Naive thymus-derived CD4-positive, alpha-beta T cell (primary cell): ENCODE measurements at regions of chr5 and their contacts with region 1.

Region 1: DNA sequence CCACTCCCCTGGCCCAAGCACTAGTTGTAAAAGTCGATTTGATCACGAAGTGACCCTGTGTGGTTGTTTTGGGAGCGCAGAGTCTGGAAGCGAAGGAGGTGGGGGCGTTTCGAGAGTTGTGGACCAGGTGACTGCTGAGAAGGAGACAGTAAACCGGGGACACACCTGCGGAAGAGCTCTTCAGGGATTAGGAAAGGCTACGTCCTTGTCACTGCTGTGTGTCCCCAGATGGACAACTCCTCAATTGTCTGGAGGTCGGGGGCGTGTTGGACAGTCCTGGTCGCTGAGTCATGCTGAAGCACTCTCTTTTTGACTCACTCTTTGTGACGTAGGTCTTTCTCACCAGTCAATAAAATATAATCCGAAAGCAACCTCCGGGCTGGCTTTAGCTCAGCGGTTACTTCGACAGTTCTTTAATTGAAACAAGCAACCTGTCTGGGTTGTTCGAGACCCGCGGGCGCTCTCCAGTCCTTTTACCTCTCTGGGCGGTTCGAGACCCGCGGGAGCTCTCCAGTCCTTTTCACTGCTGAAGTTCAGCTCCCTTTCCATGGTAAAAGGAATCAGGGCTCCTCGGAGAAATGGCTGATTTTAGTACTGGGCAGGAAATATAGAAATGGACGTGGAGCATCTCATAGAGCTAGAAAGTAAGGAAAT is 10.8 kb downstream of the ZMAT2 start:
- DNase-seq: peak; percentile 57 to 94 (median 87)
- ATAC-seq: peak; percentile 89
- H3K4me3 ChIP-seq: peak overlapping the region; percentile 96
- H3K4me3 Mint-ChIP-seq: peak overlapping the region; percentile 95 to 100 (median 99)
- H3K27ac ChIP-seq: peak overlapping the region; percentile 72
- H3K27ac Mint-ChIP-seq: peak overlapping the region; percentile 98 to 100 (median 99)
- H3K4me1 ChIP-seq: peaks cover 0 to 5% of the 10 kb centered on the region in 2 donors
- H3K4me1 Mint-ChIP-seq: peaks cover 6 to 35% (median 25%) of the 10 kb centered on the region in 7 donors
- H3K27me3 ChIP-seq: no peaks in the 10 kb centered on the region
- H3K27me3 Mint-ChIP-seq: peaks cover 0 to 11% (median 0%) of the 10 kb centered on the region in 5 donors

Region 2: GRCh38 chr5:138953387-138954256 is 1757.4 kb before region 1 on chr5:
- CTCF ChIA-PET with region 1: no interaction called
- POLR2A ChIA-PET with region 1: no interaction called
- intact Hi-C with region 1: no loop called
- DNase-seq: peak in 6 of 9 donors; percentile 4 to 29 (median 16)
- ATAC-seq: peak; percentile 78
- H3K4me3 ChIP-seq: no peak overlapping the region
- H3K4me3 Mint-ChIP-seq: peak overlapping the region; percentile 14 to 70 (median 58)
- H3K27ac ChIP-seq: no peak overlapping the region
- H3K27ac Mint-ChIP-seq: peak overlapping the region in 5 of 9 donors; percentile 29 to 61 (median 56)
- H3K4me1 ChIP-seq: peaks cover 7 to 14% of the 10 kb centered on the region in 2 donors
- H3K4me1 Mint-ChIP-seq: peaks cover 13 to 23% (median 14%) of the 10 kb centered on the region in 7 donors
- H3K27me3 ChIP-seq: no peaks in the 10 kb centered on the region
- H3K27me3 Mint-ChIP-seq: no peaks in the 10 kb centered on the region

Region 3: DNA sequence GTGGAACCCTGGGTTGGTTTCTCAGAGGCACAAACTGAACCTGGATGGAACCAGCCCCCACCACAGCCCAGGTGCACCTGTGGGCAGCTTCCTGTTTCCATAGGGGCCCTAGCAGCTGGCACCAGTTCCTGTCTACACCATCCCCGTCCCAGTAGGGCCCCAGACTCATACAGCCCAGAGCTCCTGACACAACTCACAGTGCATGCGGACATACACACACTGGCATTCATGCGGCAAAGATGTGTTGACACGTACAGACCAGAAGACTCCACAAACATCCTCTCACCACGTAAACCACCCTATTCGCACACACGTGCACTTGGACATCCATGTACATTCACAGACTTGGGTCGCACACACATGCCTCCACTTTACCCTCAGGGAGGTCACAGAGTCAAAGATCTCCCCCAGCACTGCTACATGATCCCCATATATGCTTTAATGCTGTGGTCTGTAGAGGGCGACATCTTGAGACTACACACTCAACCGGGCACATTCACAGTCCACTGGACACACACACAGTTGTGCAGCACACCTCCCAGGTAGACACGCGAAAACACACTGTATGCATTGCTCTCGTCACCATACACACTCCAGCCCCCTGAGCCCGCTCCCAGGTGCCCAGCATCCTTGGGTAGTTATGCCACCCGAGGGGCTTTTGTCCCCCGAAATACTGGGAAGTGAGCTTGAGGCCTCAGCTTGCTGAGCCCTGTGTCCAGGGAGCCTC is 1040.5 kb before region 1 on chr5:
- CTCF ChIA-PET with region 1: no interaction called
- POLR2A ChIA-PET with region 1: no interaction called
- intact Hi-C with region 1: no loop called
- DNase-seq: no peak
- ATAC-seq: peak; percentile 47
- H3K4me3 ChIP-seq: peak overlapping the region; percentile 46
- H3K4me3 Mint-ChIP-seq: peak overlapping the region; percentile 30 to 86 (median 76)
- H3K27ac ChIP-seq: no peak overlapping the region
- H3K27ac Mint-ChIP-seq: peak overlapping the region in 5 of 9 donors; percentile 5 to 82 (median 42)
- H3K4me1 ChIP-seq: peaks cover 36% of the 10 kb centered on the region in 2 donors
- H3K4me1 Mint-ChIP-seq: peaks cover 7 to 55% (median 30%) of the 10 kb centered on the region in 7 donors
- H3K27me3 ChIP-seq: peaks cover 0 to 3% of the 10 kb centered on the region in 2 donors
- H3K27me3 Mint-ChIP-seq: peaks cover 0 to 4% (median 3%) of the 10 kb centered on the region in 5 donors

Region 4: DNA sequence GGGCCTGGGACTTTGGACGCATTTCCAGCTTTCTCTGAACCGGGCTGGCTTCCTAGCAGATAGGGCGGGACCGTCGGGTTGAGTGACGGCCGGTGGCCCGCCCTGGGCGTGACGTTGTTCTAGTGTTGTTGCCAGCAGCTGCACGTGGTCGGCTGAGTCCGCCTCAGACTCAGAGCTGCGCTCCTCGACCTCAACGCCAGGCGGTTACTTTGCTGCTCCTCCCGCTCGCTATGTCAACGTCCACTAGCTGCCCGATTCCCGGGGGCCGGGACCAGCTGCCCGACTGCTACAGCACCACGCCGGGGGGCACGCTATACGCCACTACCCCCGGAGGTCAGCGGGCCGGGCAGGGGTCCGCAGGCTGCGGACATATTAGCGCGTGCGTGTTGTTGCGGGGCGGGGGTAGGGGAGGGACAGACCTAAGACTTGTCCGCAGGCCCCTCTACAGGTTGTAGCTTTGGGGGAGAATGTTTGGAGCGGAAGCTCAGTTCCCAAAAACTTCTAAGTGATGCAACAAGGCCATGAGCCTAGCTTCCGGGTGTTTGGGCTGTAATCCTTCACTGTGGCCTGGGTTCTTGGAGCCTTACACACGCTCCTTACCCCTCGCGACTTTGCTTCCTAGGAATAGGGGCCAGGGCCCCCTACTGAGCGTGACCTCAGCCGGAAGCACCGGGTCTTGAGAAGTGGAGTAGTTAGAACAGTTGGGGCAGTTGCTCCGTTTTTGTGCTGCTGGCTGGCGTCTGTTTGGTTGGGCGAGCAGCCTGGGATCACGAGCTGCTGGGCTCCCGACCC is 163.3 kb before region 1 on chr5 and contains the start of gene EIF4EBP3:
- CTCF ChIA-PET with region 1: no interaction called
- POLR2A ChIA-PET with region 1: interaction called, 20 read pairs
- intact Hi-C with region 1: loop called in 1 of 2 experiments (anchors 2 kb)
- DNase-seq: peak; percentile 76 to 90 (median 88)
- ATAC-seq: peak; percentile 98
- H3K4me3 ChIP-seq: peak within 1 kb of the TSS; percentile 83
- H3K4me3 Mint-ChIP-seq: peak within 1 kb of the TSS; percentile 85 to 99 (median 92)
- H3K27ac ChIP-seq: peak within 1 kb of the TSS; percentile 89
- H3K27ac Mint-ChIP-seq: peak within 1 kb of the TSS; percentile 93 to 99 (median 98)
- H3K4me1 ChIP-seq: peaks cover 12 to 20% of the 10 kb centered on the region in 2 donors
- H3K4me1 Mint-ChIP-seq: peaks cover 22 to 49% (median 37%) of the 10 kb centered on the region in 7 donors
- H3K27me3 ChIP-seq: no peaks in the 10 kb centered on the region
- H3K27me3 Mint-ChIP-seq: no peaks in the 10 kb centered on the region
- total RNA-seq, gene EIF4EBP3: 12.5 to 19.5 (median 16.2) TPM

Region 5: DNA sequence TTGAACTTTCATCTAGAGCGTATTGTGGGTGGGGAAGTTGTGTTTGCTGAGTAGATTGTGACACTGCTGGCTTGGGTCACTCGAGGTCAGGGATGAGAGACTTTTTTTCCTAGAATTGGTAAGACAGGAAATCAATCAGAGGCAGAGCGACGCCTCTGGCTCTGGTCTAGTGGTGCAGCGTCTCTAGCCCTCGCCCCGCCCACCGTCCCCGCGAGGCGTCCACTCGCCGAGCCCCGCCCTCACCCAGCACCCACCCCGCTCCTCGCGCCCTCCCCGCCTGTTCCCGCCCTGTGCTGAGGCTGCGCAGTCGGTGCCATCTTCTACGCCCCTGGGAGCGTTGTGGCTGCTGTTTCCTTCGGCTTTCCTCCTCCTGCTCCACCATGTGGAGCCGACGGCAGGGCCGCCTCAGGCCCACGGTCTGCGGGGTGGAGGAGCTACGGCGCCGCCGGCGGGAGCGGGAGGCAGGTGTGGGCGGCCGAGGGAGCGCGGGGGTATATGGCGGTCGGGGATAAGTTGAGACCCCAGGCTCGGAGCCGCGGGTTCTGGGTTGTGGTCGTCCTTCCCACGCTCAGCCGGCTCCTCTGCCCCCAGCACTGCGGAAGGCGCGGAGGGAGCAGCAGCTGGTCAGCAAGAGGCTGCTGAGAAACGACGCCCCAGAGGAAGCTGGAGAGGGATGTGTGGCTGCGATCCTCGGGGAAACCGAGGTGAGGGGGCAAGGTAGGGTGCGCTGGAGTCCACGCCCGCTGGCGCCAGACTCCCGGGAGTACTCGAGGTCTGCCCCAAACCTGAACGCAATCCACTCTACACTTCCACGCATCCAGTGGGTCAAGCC is 71.7 kb before region 1 on chr5 and contains the start of gene TMCO6:
- CTCF ChIA-PET with region 1: interaction called, 6 read pairs
- POLR2A ChIA-PET with region 1: interaction called, 48 read pairs
- intact Hi-C with region 1: loop called (anchors 2 kb)
- DNase-seq: peak; percentile 89 to 96 (median 94)
- ATAC-seq: peak; percentile 99
- H3K4me3 ChIP-seq: peak within 1 kb of the TSS; percentile 66
- H3K4me3 Mint-ChIP-seq: peak within 1 kb of the TSS; percentile 86 to 97 (median 93)
- H3K27ac ChIP-seq: peak within 1 kb of the TSS; percentile 79
- H3K27ac Mint-ChIP-seq: peak within 1 kb of the TSS; percentile 87 to 100 (median 93)
- H3K4me1 ChIP-seq: peaks cover 6% of the 10 kb centered on the region in 2 donors
- H3K4me1 Mint-ChIP-seq: peaks cover 21 to 54% (median 40%) of the 10 kb centered on the region in 7 donors
- H3K27me3 ChIP-seq: no peaks in the 10 kb centered on the region
- H3K27me3 Mint-ChIP-seq: no peaks in the 10 kb centered on the region
- total RNA-seq, gene TMCO6: 24.5 to 55.3 (median 36.4) TPM

Region 6: DNA sequence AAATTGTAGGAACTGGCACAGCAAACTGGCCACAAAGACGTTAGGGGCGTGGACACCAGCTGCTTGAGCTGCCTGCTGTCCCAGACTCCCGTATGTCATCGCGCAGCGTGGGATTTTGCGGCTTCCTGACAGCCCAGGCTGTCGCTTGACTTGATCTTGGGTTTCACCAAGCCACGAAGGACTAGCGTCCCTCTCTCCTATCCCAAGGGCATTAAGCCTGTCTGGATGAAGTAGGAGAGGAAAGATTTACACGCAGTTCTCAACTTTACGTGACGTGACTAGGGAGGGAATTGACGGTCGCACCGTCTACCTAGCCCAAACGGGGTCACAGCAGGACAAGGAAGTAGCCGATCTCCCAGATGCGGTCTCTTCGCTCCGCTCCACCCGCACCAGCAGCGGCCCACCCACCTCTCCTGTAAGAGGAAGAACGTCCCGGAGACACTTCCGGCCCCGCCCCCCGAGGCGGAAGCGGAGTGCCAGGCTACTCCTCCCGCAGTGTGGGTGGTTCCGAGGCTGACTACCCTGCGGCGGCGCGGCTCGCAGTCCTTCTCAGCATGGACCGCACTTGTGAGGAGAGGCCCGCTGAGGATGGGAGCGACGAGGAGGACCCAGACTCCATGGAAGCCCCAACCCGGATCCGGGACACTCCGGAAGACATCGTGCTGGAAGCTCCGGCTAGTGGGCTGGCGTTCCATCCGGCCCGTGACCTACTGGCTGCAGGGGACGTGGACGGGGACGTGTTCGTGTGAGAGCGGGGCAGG is 46.5 kb before region 1 on chr5 and contains the start of gene WDR55:
- CTCF ChIA-PET with region 1: interaction called, 4 read pairs
- POLR2A ChIA-PET with region 1: interaction called, 9 read pairs
- intact Hi-C with region 1: loop called (anchors 1 kb)
- DNase-seq: peak; percentile 91 to 98 (median 94)
- ATAC-seq: peak; percentile 97
- H3K4me3 ChIP-seq: peak within 1 kb of the TSS; percentile 95
- H3K4me3 Mint-ChIP-seq: peak within 1 kb of the TSS; percentile 96 to 100 (median 98)
- H3K27ac ChIP-seq: peak within 1 kb of the TSS; percentile 97
- H3K27ac Mint-ChIP-seq: peak within 1 kb of the TSS; percentile 93 to 100 (median 98)
- H3K4me1 ChIP-seq: peaks cover 0 to 8% of the 10 kb centered on the region in 2 donors
- H3K4me1 Mint-ChIP-seq: peaks cover 17 to 48% (median 38%) of the 10 kb centered on the region in 7 donors
- H3K27me3 ChIP-seq: no peaks in the 10 kb centered on the region
- H3K27me3 Mint-ChIP-seq: no peaks in the 10 kb centered on the region
- total RNA-seq, gene WDR55: 28.5 to 47.6 (median 37.8) TPM

Region 7: DNA sequence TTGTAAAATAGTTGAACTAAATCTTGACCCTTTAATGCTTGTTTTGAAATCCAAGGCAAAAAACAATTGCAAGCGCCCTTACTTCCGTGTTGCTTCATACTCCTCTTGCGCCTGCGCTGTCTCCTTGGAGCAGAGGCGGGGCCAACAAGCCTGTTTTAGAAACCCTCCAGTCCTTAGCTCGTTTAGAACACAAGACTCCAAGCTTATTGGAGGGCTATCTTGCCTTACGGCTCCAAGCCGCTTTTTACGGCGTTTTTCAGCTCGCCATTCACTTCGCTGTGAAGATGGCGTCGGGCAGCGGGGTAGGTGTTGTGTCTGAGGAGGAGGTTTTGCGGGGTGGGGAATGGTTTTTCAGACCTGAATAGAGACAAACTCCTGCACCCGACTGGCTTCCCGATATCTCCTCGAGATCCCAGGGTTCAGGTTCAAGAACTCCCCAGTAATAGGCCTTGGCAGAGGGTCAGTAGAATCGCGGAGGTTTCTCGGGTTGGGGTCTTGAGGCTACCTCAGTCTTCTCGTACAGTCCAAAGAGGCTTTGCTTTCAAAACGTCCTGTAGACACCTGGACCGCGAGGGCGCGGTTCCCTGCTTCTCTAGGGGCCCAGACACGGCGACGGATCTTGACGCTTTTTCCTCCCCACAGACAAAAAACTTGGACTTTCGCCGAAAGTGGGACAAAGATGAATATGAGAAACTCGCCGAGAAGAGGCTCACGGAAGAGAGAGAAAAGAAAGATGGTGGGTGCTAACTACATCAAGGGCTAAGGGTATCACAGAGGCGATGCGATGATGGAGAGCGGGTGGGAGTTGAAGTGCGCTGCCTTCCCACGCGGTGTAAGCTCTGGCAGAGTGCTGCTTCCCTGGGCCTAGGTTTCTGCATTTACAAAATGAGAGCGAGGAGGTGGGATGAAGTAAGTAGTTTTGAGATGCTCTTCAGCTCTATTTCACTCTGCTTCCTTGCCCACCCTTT is 10.6 kb before region 1 on chr5 and contains the start of gene ZMAT2:
- CTCF ChIA-PET with region 1: interaction called, 5 read pairs
- POLR2A ChIA-PET with region 1: interaction called, 73 read pairs
- intact Hi-C with region 1: loop called (anchors 1 kb)
- DNase-seq: peak; percentile 74 to 97 (median 92)
- ATAC-seq: peak; percentile 100
- H3K4me3 ChIP-seq: peak within 1 kb of the TSS; percentile 78
- H3K4me3 Mint-ChIP-seq: peak within 1 kb of the TSS; percentile 93 to 100 (median 98)
- H3K27ac ChIP-seq: peak within 1 kb of the TSS; percentile 87
- H3K27ac Mint-ChIP-seq: peak within 1 kb of the TSS; percentile 90 to 99 (median 97)
- H3K4me1 ChIP-seq: peaks cover 4 to 14% of the 10 kb centered on the region in 2 donors
- H3K4me1 Mint-ChIP-seq: peaks cover 18 to 35% (median 29%) of the 10 kb centered on the region in 7 donors
- H3K27me3 ChIP-seq: no peaks in the 10 kb centered on the region
- H3K27me3 Mint-ChIP-seq: no peaks in the 10 kb centered on the region
- total RNA-seq, gene ZMAT2: 37.7 to 63.0 (median 55.1) TPM

Region 8: DNA sequence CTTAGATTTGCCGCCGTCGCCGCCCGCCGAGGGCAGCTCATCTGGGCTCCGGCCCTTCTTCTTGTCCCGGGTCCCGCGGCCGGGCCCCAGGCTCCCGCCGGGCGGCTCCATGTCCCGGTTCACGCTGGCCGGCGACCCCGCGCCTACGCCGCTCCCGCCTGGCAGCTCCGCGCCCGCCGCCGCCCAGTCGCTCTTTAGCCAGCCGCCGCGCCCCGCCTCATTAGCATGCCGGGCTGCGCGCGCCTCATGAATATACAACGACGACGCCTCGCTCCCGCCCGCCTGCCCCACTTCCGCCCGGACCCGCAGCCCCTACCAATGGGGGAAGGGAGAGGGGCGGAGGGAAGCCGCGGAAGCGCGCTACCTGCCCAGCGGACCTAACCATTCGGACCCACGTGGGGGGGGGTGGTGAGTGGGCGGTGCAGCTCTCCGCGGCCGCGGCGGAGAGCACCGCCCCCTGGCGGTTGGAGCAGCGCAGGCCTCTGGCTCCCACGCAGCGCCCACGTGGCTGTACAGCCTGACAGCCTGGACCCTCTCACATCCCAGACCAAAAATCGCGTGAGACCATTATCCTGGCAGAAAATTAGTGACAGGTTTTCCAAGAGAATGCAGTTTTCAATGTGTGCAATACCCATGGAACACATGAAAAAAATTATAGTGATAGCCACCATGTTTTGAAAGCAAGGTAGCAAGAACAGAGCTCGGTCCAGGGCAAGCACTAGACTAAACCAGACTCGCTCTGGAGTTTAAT is 908.0 kb after region 1 on chr5 and contains the start of gene DIAPH1:
- CTCF ChIA-PET with region 1: no interaction called
- POLR2A ChIA-PET with region 1: no interaction called
- intact Hi-C with region 1: loop called in 1 of 2 experiments (anchors 10 kb)
- DNase-seq: peak; percentile 91 to 98 (median 96)
- ATAC-seq: peak; percentile 98
- H3K4me3 ChIP-seq: peak within 1 kb of the TSS; percentile 77
- H3K4me3 Mint-ChIP-seq: peak within 1 kb of the TSS; percentile 94 to 100 (median 100)
- H3K27ac ChIP-seq: peak within 1 kb of the TSS; percentile 97
- H3K27ac Mint-ChIP-seq: peak within 1 kb of the TSS; percentile 91 to 99 (median 95)
- H3K4me1 ChIP-seq: peaks cover 11 to 22% of the 10 kb centered on the region in 2 donors
- H3K4me1 Mint-ChIP-seq: peaks cover 44 to 61% (median 56%) of the 10 kb centered on the region in 7 donors
- H3K27me3 ChIP-seq: no peaks in the 10 kb centered on the region
- H3K27me3 Mint-ChIP-seq: no peaks in the 10 kb centered on the region
- total RNA-seq, gene DIAPH1: 163 to 278 (median 173) TPM